ENCODE measurements at regions of chr22 and their contacts with region 1.

Region 1: GRCh38 chr22:19619144-19620009 is 94.9 kb upstream of the SEPTIN5 start:
- DNase-seq: peak; percentile 33
- H3K4me3 ChIP-seq: no peak overlapping the region
- H3K27ac ChIP-seq: no peak overlapping the region
- H3K4me1 ChIP-seq: peaks cover 20% of the 10 kb centered on the region
- H3K27me3 ChIP-seq: peaks cover 0 to 3% of the 10 kb centered on the region in 2 experiments
- CTCF ChIP-seq: no peak
- POLR2A ChIP-seq: no peak

Region 2: GRCh38 chr22:19523240-19524169 is 95.9 kb before region 1 on chr22:
- CTCF ChIA-PET with region 1: interaction called, 3 read pairs
- POLR2A ChIA-PET with region 1: interaction called, 3 read pairs
- dilution Hi-C with region 1: no loop called
- intact Hi-C with region 1: loop called (anchors 2 kb)
- DNase-seq: peak; percentile 60
- H3K4me3 ChIP-seq: peak overlapping the region; percentile 53 to 75 (median 61)
- H3K27ac ChIP-seq: peak overlapping the region; percentile 55
- H3K4me1 ChIP-seq: peaks cover 44% of the 10 kb centered on the region
- H3K27me3 ChIP-seq: no peaks in the 10 kb centered on the region
- CTCF ChIP-seq: no peak
- POLR2A ChIP-seq: peak; percentile 48

Region 3: GRCh38 chr22:19607192-19608002 is 12.0 kb before region 1 on chr22:
- CTCF ChIA-PET with region 1: no interaction called
- POLR2A ChIA-PET with region 1: no interaction called
- dilution Hi-C with region 1: no loop called
- intact Hi-C with region 1: loop called (anchors 1 kb)
- DNase-seq: peak; percentile 74
- H3K4me3 ChIP-seq: no peak overlapping the region
- H3K27ac ChIP-seq: no peak overlapping the region
- H3K4me1 ChIP-seq: peaks cover 2% of the 10 kb centered on the region
- H3K27me3 ChIP-seq: no peaks in the 10 kb centered on the region
- CTCF ChIP-seq: no peak
- POLR2A ChIP-seq: no peak

Measured in endothelial cell of umbilical vein (primary cell).